ENCODE measurements at regions of chr16 and their contacts with region 1.

Region 1: GRCh38 chr16:79628501-79628975 is 28.0 kb upstream of the MAF start:
- DNase-seq: no peak
- ATAC-seq: no peak
- H3K4me3 ChIP-seq: no peak overlapping the region
- H3K27ac ChIP-seq: no peak overlapping the region
- H3K4me1 ChIP-seq: no peaks in the 10 kb centered on the region
- H3K27me3 ChIP-seq: peaks cover 3% of the 10 kb centered on the region

Region 2: DNA sequence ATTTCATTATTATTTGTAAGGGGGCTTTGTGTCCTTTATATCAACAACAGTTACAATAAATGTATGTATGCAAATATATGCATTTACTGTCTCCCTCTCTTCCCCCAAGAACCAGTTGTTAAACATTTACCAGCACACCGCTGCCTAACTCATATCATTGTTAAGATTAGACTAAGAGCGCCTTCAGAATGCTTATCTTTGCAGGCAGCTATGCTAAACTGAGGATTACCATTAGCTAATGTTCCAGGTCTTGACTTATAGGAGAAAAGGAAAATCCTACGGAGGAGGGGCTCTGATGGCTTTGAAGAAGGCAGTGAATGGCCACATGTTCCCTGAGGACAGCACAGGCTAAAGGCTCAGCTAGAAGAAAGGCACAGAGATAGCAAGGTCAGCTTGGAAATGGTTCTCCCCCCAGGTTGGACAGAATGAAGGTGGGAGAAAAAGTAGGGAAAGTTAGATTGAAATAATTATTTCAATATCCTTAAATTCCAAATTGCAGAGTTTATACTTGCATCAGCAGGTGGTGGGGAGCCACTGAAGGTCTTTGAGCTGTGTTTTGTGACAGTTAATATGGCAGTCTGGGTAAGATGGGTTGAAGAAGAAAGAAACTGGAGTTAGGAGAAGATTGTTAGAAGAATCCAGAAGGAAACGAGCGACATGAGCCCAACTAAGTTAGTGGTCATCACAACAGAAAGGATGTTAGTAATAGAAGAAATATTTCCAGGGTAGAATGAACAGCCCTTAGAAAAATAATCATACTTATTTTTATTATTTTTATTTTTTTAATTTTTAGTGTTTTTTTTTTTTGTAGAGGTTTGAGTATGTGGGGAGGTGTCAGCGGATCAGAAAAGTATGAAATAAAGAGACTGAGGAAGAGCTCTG is 59.0 kb after region 1 on chr16:
- intact Hi-C with region 1: loop called in 1 of 4 experiments (anchors 10 kb)
- DNase-seq: no peak
- ATAC-seq: no peak
- H3K4me3 ChIP-seq: no peak overlapping the region
- H3K27ac ChIP-seq: no peak overlapping the region
- H3K4me1 ChIP-seq: no peaks in the 10 kb centered on the region
- H3K27me3 ChIP-seq: no peaks in the 10 kb centered on the region

Region 3: DNA sequence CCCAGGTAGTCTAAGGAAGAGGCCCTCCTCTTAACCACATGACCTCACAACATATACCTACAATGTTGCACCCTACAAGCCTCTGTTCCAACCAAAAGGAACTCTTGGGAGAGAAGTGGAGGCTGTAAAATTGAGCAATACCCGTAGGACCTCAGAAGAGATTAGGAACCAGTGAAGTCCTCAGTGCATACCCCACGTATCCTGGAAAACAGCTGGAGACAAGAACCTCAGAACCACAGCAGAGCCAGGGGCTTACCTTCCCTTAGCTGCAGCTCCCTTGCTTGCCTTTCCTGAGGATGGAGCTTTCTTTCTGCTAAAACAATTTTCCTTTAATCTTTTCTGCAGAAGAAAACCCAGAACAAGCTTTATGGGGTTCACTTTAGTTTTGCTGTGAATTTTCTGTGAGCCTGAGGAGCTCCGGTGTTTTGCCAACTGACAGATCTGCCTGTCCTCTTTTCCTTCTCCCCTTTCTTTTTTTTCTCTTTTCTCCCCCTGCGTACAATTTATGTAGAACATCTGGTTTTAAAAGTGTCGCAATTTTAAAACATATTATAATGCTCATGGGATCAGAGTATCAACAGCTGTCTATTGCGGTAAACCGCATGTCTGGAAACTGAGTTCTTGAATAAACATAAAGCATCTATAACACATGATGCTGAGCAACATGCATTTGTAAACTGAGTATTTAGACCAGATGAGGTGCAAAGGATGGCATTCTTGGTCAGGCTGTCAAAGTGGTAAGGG is 198.4 kb after region 1 on chr16:
- intact Hi-C with region 1: no loop called
- DNase-seq: no peak
- ATAC-seq: no peak
- H3K4me3 ChIP-seq: no peak overlapping the region
- H3K27ac ChIP-seq: no peak overlapping the region
- H3K4me1 ChIP-seq: no peaks in the 10 kb centered on the region
- H3K27me3 ChIP-seq: no peaks in the 10 kb centered on the region

Region 4: GRCh38 chr16:80079072-80079471 is 450.5 kb after region 1 on chr16:
- intact Hi-C with region 1: loop called in 1 of 4 experiments (anchors 10 kb)
- DNase-seq: no peak
- ATAC-seq: no peak
- H3K4me3 ChIP-seq: no peak overlapping the region
- H3K27ac ChIP-seq: no peak overlapping the region
- H3K4me1 ChIP-seq: no peaks in the 10 kb centered on the region
- H3K27me3 ChIP-seq: no peaks in the 10 kb centered on the region